ENCODE measurements at regions of chr16 and their contacts with region 1.

Region 1: DNA sequence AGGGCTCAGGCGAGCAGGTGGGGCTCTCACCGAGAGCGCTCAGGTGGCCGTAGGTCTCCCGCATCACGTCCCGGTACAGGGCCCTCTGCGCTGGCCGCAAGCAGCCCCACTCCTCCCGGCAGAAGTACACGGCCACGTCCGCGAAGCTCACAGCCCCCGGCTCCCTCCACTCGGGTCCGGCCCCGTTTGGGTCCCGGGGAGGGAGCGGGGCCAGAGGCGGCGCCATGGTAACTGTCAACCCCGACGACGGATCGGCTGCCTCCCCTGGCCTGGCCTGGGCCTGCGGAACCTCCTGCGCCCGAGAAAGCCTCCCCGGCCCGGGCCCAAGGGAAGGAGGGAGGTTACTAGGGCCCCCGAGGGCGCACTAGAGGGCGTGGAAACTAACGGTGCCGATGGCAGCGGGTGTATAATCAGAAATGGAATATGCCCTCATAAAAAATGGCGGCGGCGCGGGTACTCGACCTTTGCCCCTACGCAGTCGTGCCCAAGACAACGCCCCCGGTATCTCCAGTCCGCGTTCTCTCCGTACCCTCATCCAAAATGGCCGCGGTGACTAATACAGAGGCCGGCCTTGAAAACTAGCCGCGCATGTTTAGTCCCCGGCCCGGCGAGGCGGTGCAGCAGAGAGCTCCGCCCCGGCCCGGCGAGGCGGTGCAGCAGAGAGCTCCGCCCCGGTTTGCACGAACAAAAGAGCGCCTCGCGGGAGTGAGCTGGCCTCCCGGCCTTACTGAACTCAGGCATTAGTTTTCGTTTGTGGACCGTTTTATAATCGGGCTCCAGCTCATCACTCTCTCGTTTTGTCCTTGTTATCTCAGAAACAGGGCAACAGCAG is at the start of gene ZNF764:
- DNase-seq: peak in 1 of 2 donors; percentile 98
- H3K4me3 ChIP-seq: peak within 1 kb of the TSS; percentile 78 to 95
- H3K27ac ChIP-seq: peak within 1 kb of the TSS; percentile 77
- H3K4me1 ChIP-seq: peaks cover 31% of the 10 kb centered on the region
- H3K27me3 ChIP-seq: no peaks in the 10 kb centered on the region
- CTCF ChIP-seq: peak in 1 of 3 experiments; percentile 16
- POLR2A ChIP-seq: no peak
- total RNA-seq, gene ZNF764: 18.4 TPM

Region 2: GRCh38 chr16:30585400-30586189 is 27.4 kb after region 1 on chr16 and contains the start of gene ZNF785:
- intact Hi-C with region 1: loop called (anchors 1 kb)
- DNase-seq: peak in 1 of 2 donors; percentile 99
- H3K4me3 ChIP-seq: peak within 1 kb of the TSS; percentile 87 to 90
- H3K27ac ChIP-seq: peak within 1 kb of the TSS; percentile 92
- H3K4me1 ChIP-seq: peaks cover 45% of the 10 kb centered on the region
- H3K27me3 ChIP-seq: no peaks in the 10 kb centered on the region
- CTCF ChIP-seq: no peak
- POLR2A ChIP-seq: peak in 1 of 2 donors; percentile 23
- total RNA-seq, gene ZNF785: 21.6 TPM

Region 3: DNA sequence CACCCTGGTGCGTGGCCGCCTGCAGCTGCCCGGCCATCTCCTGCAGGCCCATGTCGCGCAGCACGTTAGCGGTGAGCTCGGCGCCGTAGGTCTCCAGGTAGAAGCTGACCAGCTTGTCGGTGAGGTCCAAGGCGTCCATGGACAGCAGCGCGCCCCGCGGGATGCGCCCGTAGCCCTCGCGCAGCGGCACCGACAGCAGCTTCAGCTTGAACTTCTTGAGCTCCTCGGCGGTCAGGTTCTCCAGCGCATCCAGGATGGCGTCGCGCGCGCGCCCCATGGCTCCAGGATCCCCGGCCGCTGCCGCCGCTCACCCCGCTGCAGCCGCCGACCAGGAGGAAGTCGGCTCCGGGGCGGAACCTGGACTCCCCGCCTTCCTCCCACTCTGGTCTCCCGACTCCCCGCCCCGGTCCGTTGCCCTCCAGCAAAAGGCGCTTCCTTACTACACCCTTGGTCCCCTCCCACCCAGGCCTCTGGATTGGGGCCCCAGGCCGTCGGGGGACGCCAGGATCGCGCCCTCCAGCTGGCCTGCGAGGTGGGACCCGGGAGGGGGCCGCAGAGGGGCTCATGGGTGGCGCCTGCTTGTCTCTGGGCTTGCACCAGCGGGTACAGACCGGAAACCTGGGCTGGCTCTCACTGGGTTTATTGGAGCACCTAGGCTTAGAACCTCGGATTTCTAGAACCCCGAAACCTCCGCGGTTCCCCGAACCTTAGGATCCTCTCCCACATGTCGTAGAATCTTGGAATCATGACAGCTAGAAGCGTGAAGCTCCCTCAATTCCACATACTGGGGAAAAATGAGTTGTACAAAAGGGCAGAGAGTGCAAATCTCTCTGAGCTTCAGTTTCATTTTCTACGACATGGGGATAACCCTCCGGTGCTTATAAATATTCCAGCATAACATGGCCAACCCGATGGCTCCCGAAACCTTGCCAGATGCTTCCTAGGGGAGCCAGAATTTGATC is 644.5 kb after region 1 on chr16 and contains the start of gene PYCARD:
- intact Hi-C with region 1: no loop called
- DNase-seq: no peak
- H3K4me3 ChIP-seq: peak within 1 kb of the TSS; percentile 57 to 59
- H3K27ac ChIP-seq: peak within 1 kb of the TSS; percentile 50
- H3K4me1 ChIP-seq: peaks cover 30% of the 10 kb centered on the region
- H3K27me3 ChIP-seq: no peaks in the 10 kb centered on the region
- CTCF ChIP-seq: no peak
- POLR2A ChIP-seq: no peak
- total RNA-seq, gene PYCARD: 85.0 TPM

Measured in vagina (tissue), 2 donors.